Left cardiac atrium (tissue), 4 donors: ENCODE measurements at regions of chr10 and their contacts with region 1.

Region 1: GRCh38 chr10:72133517-72133916 is 45.2 kb upstream of the SPOCK2 start:
- DNase-seq: no peak
- ATAC-seq: peak in 1 of 2 donors; percentile 75

Region 2: GRCh38 chr10:72215652-72216549 is 82.4 kb after region 1 on chr10 and contains the starts of genes ANAPC16 and ASCC1:
- intact Hi-C with region 1: loop called (anchors 2 to 10 kb)
- DNase-seq: peak; percentile 92
- ATAC-seq: peak; percentile 98 to 99
- total RNA-seq, gene ANAPC16: 155 to 168 TPM
- total RNA-seq, gene ASCC1: 25.2 to 28.1 TPM

Region 3: DNA sequence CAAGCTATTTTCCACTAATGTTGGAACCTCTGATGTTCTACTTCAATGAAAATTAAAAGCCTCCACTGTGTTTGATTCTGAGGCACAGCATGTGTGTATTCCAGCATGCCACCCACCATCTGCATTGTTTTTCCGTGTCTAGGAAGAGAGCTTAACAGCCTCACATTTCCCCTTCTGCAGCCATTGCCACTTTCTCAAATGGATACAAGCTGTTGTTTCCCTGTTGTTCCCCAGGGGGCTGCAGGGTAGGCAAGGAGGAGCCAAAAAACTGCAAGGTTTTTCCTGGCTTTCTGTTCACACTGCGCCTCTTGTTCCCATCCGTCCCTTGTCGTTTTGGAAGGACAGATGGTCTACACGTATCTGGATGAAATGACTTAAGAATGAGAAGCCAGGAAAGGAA is 293.5 kb after region 1 on chr10:
- intact Hi-C with region 1: no loop called
- DNase-seq: no peak
- ATAC-seq: peak; percentile 15 to 53

Region 4: DNA sequence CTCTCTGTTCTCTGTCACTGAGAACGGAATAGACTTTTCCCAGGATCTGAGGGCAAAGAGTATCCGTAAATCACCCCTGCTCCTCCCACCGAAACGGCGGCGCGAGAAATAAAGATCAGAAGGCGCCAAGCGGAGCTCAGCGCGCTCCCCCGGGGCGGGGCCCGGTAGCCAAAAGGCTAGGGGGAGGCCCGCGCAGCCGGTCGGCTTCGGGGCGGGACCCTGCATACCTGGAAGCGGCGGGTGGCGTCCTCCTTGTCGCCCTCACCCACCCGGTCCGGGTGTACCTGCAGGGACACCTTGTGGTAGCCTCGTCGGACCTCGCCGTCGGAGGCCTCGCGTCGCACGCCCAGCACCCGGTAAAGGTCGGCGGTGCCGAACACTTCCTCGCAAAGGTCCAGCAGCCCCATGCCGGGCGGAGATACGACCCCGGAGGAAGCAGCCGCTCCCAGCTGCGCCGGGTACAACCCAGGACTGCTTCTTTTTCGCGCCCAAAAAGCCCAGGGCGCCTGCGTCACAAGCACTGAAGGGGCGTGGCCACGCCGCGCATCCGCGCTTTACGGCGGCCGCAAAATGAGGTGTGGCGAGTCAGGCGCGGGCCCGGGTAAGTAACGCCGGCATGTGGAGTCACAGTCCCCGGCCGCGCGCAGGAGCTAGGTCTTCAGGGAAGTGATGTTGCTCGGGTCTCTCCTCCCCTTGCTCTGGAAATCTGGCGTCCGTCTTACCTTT is 1113.4 kb after region 1 on chr10 and contains the start of gene DNAJC9:
- intact Hi-C with region 1: no loop called
- DNase-seq: peak; percentile 97
- ATAC-seq: peak; percentile 94 to 97
- total RNA-seq, gene DNAJC9: 8.8 to 11.5 TPM